PC-3 (cell line): ENCODE measurements at regions of chr5 and their contacts with region 1.

Region 1: GRCh38 chr5:158174918-158175851 is 316.2 kb upstream of the CLINT1 start:
- DNase-seq: peak; percentile 90
- ATAC-seq: peak; percentile 71
- H3K4me3 ChIP-seq: no peak overlapping the region
- H3K27ac ChIP-seq: no peak overlapping the region
- H3K4me1 ChIP-seq: peaks cover 15% of the 10 kb centered on the region
- H3K27me3 ChIP-seq: peaks cover 50% of the 10 kb centered on the region
- CTCF ChIP-seq: peak; percentile 99

Region 2: GRCh38 chr5:158013939-158014338 is 161.2 kb before region 1 on chr5:
- CTCF ChIA-PET with region 1: interaction called, 3 read pairs
- POLR2A ChIA-PET with region 1: no interaction called
- intact Hi-C with region 1: loop called (anchors 10 kb)
- DNase-seq: peak; percentile 77
- ATAC-seq: peak; percentile 94
- H3K4me3 ChIP-seq: no peak overlapping the region
- H3K27ac ChIP-seq: no peak overlapping the region
- H3K4me1 ChIP-seq: no peaks in the 10 kb centered on the region
- H3K27me3 ChIP-seq: peaks cover 40% of the 10 kb centered on the region
- CTCF ChIP-seq: peak; percentile 97

Region 3: DNA sequence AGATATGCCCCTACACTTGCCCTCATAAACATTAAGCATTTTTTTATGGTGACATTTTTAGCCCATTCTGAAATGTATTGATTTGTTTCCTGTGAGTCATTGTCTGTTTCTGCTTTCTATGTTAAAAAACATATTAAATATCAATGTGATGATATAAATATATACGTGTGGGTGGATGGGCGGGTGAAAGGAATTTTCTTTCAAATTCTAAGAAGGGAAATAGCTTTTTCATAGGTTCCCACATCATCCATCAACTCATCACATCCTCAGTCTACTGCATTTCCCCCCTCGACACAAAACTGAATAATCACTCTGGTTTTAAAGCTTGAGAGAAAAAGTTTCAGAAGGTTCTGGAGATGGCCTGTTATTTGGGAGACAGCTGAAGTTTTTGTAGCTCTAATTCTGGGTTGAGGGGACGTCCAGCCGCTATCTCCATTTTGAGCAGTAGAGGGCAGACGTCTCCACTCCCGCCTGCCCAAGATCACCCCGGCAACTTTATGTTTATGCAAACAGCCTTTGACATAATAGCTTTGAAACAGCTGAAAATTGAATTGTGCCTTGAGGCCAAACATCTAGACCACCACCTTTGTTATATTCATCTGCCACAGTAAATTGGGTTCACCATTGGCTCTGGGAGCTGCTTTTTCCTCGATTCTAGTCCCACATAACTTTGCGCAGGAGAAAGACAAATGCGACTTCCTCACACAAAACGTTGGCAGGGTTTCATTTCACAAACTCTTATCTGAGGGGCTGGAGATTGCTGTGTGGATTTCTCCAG is 100.0 kb before region 1 on chr5:
- CTCF ChIA-PET with region 1: interaction called, 11 read pairs
- POLR2A ChIA-PET with region 1: no interaction called
- intact Hi-C with region 1: loop called (anchors 2 kb)
- DNase-seq: peak; percentile 86
- ATAC-seq: peak; percentile 97
- H3K4me3 ChIP-seq: peak overlapping the region; percentile 55
- H3K27ac ChIP-seq: no peak overlapping the region
- H3K4me1 ChIP-seq: peaks cover 5% of the 10 kb centered on the region
- H3K27me3 ChIP-seq: peaks cover 47% of the 10 kb centered on the region
- CTCF ChIP-seq: peak; percentile 98

Region 4: GRCh38 chr5:158135682-158136179 is 39.5 kb before region 1 on chr5:
- CTCF ChIA-PET with region 1: interaction called, 10 read pairs
- POLR2A ChIA-PET with region 1: no interaction called
- intact Hi-C with region 1: no loop called
- DNase-seq: no peak
- ATAC-seq: no peak
- H3K4me3 ChIP-seq: no peak overlapping the region
- H3K27ac ChIP-seq: no peak overlapping the region
- H3K4me1 ChIP-seq: no peaks in the 10 kb centered on the region
- H3K27me3 ChIP-seq: peaks cover 23% of the 10 kb centered on the region; the same call in 1 of the 2 replicates
- CTCF ChIP-seq: no peak

Region 5: DNA sequence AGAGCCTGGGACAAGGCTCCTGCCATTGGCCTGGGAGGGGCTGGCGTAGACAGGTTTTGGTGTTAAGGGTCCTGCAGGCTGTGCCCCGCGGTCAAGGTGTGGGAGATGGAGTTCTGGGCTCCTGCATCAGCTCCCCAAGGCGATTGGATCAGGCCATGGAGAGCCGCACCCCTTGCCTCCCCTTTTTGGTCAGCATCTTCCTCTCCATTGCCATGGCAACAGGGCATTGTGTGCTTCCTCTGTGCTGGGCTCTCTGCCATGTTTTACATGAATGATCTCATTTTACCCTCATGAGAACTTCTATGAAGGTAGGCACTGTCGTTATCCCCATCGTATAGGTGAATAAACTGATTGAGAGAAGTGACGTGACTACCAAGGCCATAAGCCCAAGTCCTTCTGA is 28.1 kb after region 1 on chr5:
- CTCF ChIA-PET with region 1: no interaction called
- POLR2A ChIA-PET with region 1: no interaction called
- intact Hi-C with region 1: no loop called
- DNase-seq: no peak
- ATAC-seq: no peak
- H3K4me3 ChIP-seq: no peak overlapping the region
- H3K27ac ChIP-seq: no peak overlapping the region
- H3K4me1 ChIP-seq: no peaks in the 10 kb centered on the region
- H3K27me3 ChIP-seq: peaks cover 88% of the 10 kb centered on the region
- CTCF ChIP-seq: no peak

Region 6: DNA sequence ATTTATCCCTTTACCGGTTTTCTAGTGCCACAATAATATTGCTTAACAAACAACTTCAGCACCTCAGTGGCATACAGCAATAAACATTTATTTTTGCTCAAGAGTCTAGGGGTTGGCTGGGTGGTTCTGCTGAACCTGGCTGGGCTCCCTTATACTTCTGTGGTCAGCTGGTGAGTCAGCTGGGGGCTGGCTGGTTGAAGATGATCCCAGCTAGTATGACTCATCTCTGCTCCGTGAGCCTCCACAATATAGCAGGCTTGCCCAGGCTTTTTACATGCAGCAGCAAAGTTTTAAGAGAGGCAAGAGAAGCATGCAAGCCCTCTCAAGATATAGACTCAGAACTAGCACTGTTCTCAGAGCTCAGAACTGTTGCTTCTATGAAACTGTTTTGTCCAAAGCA is 207.3 kb after region 1 on chr5:
- CTCF ChIA-PET with region 1: interaction called, 3 read pairs
- POLR2A ChIA-PET with region 1: no interaction called
- intact Hi-C with region 1: loop called (anchors 5 kb)
- DNase-seq: peak; percentile 97
- ATAC-seq: peak; percentile 82
- H3K4me3 ChIP-seq: no peak overlapping the region
- H3K27ac ChIP-seq: peak overlapping the region; percentile 69
- H3K4me1 ChIP-seq: peaks cover 60% of the 10 kb centered on the region
- H3K27me3 ChIP-seq: no peaks in the 10 kb centered on the region
- CTCF ChIP-seq: no peak

Region 7: GRCh38 chr5:159106569-159107282 is 931.5 kb after region 1 on chr5:
- CTCF ChIA-PET with region 1: no interaction called
- POLR2A ChIA-PET with region 1: no interaction called
- intact Hi-C with region 1: loop called (anchors 5 kb)
- DNase-seq: peak; percentile 69
- ATAC-seq: peak; percentile 94
- H3K4me3 ChIP-seq: peak overlapping the region; percentile 44; the same call in 1 of the 2 replicates
- H3K27ac ChIP-seq: no peak overlapping the region
- H3K4me1 ChIP-seq: 0 out of 2 replicates have a peak, but pooled peaks cover 8% of the 10 kb centered on the region
- H3K27me3 ChIP-seq: peaks cover 44% of the 10 kb centered on the region
- CTCF ChIP-seq: peak; percentile 85